BJ (cell line): ENCODE measurements at regions of chr10 and their contacts with region 1.

Region 1: GRCh38 chr10:110304780-110305421 is at the start of gene SMNDC1:
- DNase-seq: peak; percentile 88
- H3K4me3 ChIP-seq: peak within 1 kb of the TSS; percentile 91
- H3K27me3 ChIP-seq: no peaks in the 10 kb centered on the region
- CTCF ChIP-seq: no peak
- polyA plus RNA-seq, gene SMNDC1: 6.1 and 13.4 TPM in 2 replicates

Region 2: GRCh38 chr10:110497438-110498086 is 192.7 kb after region 1 on chr10 and contains the start of gene DUSP5:
- CTCF ChIA-PET with region 1: interaction called, 25 read pairs
- POLR2A ChIA-PET with region 1: no interaction called
- DNase-seq: no peak
- H3K4me3 ChIP-seq: peak within 1 kb of the TSS; percentile 71
- H3K27me3 ChIP-seq: no peaks in the 10 kb centered on the region
- CTCF ChIP-seq: no peak
- polyA plus RNA-seq, gene DUSP5: 30.3 and 30.4 TPM in 2 replicates

Region 3: GRCh38 chr10:110600487-110601101 is 295.7 kb after region 1 on chr10:
- CTCF ChIA-PET with region 1: interaction called, 14 read pairs
- POLR2A ChIA-PET with region 1: interaction called, 4 read pairs
- DNase-seq: no peak
- H3K4me3 ChIP-seq: no peak overlapping the region
- H3K27me3 ChIP-seq: no peaks in the 10 kb centered on the region
- CTCF ChIP-seq: peak; percentile 55

Region 4: GRCh38 chr10:111634191-111634590 is 1329.3 kb after region 1 on chr10:
- CTCF ChIA-PET with region 1: no interaction called
- POLR2A ChIA-PET with region 1: no interaction called
- DNase-seq: no peak
- H3K4me3 ChIP-seq: no peak overlapping the region
- H3K27me3 ChIP-seq: no peaks in the 10 kb centered on the region
- CTCF ChIP-seq: no peak